A673 (cell line): ENCODE measurements at regions of chr9 and their contacts with region 1.

Region 1: DNA sequence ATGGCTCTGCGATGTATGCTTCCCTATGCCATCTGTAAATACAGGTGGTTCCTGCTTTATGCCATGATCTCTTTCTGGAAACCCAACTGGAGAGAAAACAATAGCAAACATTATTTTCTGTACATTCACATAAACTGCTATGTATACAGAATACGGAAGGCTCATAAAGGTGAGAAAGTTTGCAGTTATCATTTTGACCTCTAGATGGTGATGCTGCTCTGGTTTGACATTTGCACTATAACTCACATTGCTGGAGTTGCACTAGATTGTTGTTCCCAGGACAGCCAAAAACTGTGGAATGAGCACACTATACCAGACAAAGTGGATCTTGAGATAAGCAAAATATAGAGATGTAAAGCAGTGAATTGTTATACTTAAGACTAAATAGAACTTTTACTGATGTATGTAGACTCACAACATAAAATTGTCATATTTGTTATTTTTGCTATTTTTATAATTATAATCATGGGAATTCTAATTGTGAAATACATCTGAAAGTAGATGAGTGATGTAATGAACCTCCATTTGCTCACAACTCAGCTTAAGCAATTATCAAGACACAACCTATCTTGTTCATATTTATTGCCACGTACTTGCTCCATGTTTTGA is 246.5 kb downstream of the PTPRD start:
- DNase-seq: peak; percentile 60
- H3K4me3 ChIP-seq: no peak overlapping the region
- H3K27ac ChIP-seq: no peak overlapping the region
- H3K4me1 ChIP-seq: no peaks in the 10 kb centered on the region
- H3K27me3 ChIP-seq: no peaks in the 10 kb centered on the region
- CTCF ChIP-seq: peak; percentile 80

Region 2: GRCh38 chr9:10387282-10387681 is 21.0 kb after region 1 on chr9:
- CTCF ChIA-PET with region 1: no interaction called
- POLR2A ChIA-PET with region 1: no interaction called
- intact Hi-C with region 1: no loop called
- DNase-seq: no peak
- H3K4me3 ChIP-seq: no peak overlapping the region
- H3K27ac ChIP-seq: no peak overlapping the region
- H3K4me1 ChIP-seq: no peaks in the 10 kb centered on the region
- H3K27me3 ChIP-seq: no peaks in the 10 kb centered on the region
- CTCF ChIP-seq: no peak

Region 3: DNA sequence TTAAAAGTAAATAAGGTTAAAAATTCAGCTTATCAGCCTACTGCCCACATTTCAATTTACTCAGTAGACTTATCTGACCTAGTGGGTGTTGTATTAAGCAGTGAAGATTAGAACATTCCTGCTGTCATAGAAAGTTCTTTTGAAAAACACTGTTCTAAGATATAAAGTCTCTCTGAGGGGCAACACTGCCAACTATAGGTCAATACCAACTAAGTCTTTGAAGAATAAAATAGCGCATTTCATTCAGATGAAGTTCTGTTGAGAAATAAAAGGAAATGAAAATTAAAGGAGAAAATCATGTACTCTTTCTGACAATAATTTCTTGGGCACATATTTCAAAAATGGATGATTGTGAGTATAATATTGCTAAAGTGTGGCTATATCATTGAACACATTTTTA is 159.7 kb after region 1 on chr9:
- CTCF ChIA-PET with region 1: no interaction called
- POLR2A ChIA-PET with region 1: no interaction called
- intact Hi-C with region 1: loop called (anchors 5 kb)
- DNase-seq: no peak
- H3K4me3 ChIP-seq: no peak overlapping the region
- H3K27ac ChIP-seq: no peak overlapping the region
- H3K4me1 ChIP-seq: no peaks in the 10 kb centered on the region
- H3K27me3 ChIP-seq: no peaks in the 10 kb centered on the region
- CTCF ChIP-seq: peak; percentile 29; the same call in 1 of the 2 replicates

Region 4: GRCh38 chr9:10612641-10613398 is 246.5 kb after region 1 on chr9 and contains the start of gene PTPRD:
- CTCF ChIA-PET with region 1: no interaction called
- POLR2A ChIA-PET with region 1: no interaction called
- intact Hi-C with region 1: loop called (anchors 10 kb)
- DNase-seq: peak; percentile 67
- H3K4me3 ChIP-seq: peak within 1 kb of the TSS; percentile 54
- H3K27ac ChIP-seq: no peak within 1 kb of the TSS
- H3K4me1 ChIP-seq: no peaks in the 10 kb centered on the region
- H3K27me3 ChIP-seq: peaks cover 14% of the 10 kb centered on the region
- CTCF ChIP-seq: no peak; the same call in 1 of the 2 replicates
- total RNA-seq, gene PTPRD: not detected in 2 replicates

Region 5: DNA sequence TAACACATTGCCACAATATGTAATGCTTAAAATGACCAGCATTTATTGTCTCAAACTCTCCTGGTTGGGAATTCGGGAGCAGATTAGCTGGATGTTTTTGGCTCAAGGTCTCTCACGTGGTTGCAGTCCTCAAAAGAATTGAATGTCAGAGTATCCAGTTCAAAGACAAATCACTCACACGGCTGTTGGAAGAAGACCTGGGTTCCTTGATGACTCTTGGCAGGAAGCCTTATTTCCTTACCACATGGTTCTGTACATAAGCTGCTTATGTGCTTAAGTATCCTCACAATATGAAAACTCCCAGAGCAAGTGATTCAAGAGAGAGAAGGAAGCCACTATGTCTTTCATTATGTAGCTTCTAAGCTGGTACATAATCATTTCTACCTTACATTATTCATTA is 476.9 kb after region 1 on chr9:
- CTCF ChIA-PET with region 1: no interaction called
- POLR2A ChIA-PET with region 1: no interaction called
- intact Hi-C with region 1: loop called (anchors 10 kb)
- DNase-seq: peak; percentile 63
- H3K4me3 ChIP-seq: no peak overlapping the region
- H3K27ac ChIP-seq: no peak overlapping the region
- H3K4me1 ChIP-seq: no peaks in the 10 kb centered on the region
- H3K27me3 ChIP-seq: no peaks in the 10 kb centered on the region
- CTCF ChIP-seq: no peak

Region 6: GRCh38 chr9:11086561-11086960 is 720.3 kb after region 1 on chr9:
- CTCF ChIA-PET with region 1: no interaction called
- POLR2A ChIA-PET with region 1: no interaction called
- intact Hi-C with region 1: loop called (anchors 2 kb)
- DNase-seq: peak; percentile 12
- H3K4me3 ChIP-seq: no peak overlapping the region
- H3K27ac ChIP-seq: peak overlapping the region; percentile 8
- H3K4me1 ChIP-seq: no peaks in the 10 kb centered on the region
- H3K27me3 ChIP-seq: no peaks in the 10 kb centered on the region
- CTCF ChIP-seq: no peak

Region 7: DNA sequence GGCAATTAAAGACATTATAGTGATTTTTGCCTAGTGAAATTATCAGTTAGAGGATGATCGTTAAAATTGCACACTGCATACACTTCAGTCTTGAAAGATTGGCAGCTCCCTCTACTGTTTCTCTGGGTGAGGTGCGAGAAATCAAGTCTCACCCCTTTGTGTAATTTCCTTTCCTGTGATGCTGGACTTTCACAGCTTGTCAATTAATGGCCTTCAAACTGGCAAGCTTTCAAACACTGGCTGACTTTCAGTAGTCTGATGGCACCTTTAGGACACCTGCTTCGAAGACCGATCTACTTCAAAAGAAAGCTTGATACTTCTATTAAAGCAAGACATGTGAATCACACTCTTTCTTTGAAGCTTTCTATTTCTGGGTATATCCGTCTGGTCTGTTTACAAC is 953.3 kb after region 1 on chr9:
- CTCF ChIA-PET with region 1: no interaction called
- POLR2A ChIA-PET with region 1: no interaction called
- intact Hi-C with region 1: loop called (anchors 1 kb)
- DNase-seq: peak; percentile 46
- H3K4me3 ChIP-seq: no peak overlapping the region
- H3K27ac ChIP-seq: no peak overlapping the region
- H3K4me1 ChIP-seq: no peaks in the 10 kb centered on the region
- H3K27me3 ChIP-seq: no peaks in the 10 kb centered on the region
- CTCF ChIP-seq: peak; percentile 57

Region 8: GRCh38 chr9:12329623-12329985 is 1963.3 kb after region 1 on chr9:
- CTCF ChIA-PET with region 1: no interaction called
- POLR2A ChIA-PET with region 1: no interaction called
- intact Hi-C with region 1: loop called (anchors 10 kb)
- DNase-seq: no peak
- H3K4me3 ChIP-seq: no peak overlapping the region
- H3K27ac ChIP-seq: no peak overlapping the region
- H3K4me1 ChIP-seq: no peaks in the 10 kb centered on the region
- H3K27me3 ChIP-seq: no peaks in the 10 kb centered on the region
- CTCF ChIP-seq: no peak; the same call in 1 of the 2 replicates